ENCODE measurements at regions of chr6 and their contacts with region 1.

Region 1: GRCh38 chr6:70310063-70310694 is 7.3 kb upstream of the COL9A1 start:
- DNase-seq: peak; percentile 2
- H3K4me3 ChIP-seq: no peak overlapping the region
- H3K27me3 ChIP-seq: peaks cover 11% of the 10 kb centered on the region
- CTCF ChIP-seq: peak; percentile 65

Region 2: GRCh38 chr6:70955441-70956190 is 645.4 kb after region 1 on chr6:
- CTCF ChIA-PET with region 1: interaction called, 12 read pairs
- POLR2A ChIA-PET with region 1: no interaction called
- DNase-seq: no peak
- H3K4me3 ChIP-seq: peak overlapping the region; percentile 38
- H3K27me3 ChIP-seq: peaks cover 20% of the 10 kb centered on the region
- CTCF ChIP-seq: peak; percentile 80

Region 3: GRCh38 chr6:71012866-71013469 is 702.8 kb after region 1 on chr6:
- CTCF ChIA-PET with region 1: interaction called, 24 read pairs
- POLR2A ChIA-PET with region 1: no interaction called
- DNase-seq: no peak
- H3K4me3 ChIP-seq: no peak overlapping the region
- H3K27me3 ChIP-seq: peaks cover 2% of the 10 kb centered on the region
- CTCF ChIP-seq: peak; percentile 85

Measured in BJ (cell line).